Activated CD4-positive, alpha-beta memory T cell treated with anti-CD3 and anti-CD28 coated beads for 36 hours (primary cell): ENCODE measurements at regions of chr3 and their contacts with region 1.

Region 1: DNA sequence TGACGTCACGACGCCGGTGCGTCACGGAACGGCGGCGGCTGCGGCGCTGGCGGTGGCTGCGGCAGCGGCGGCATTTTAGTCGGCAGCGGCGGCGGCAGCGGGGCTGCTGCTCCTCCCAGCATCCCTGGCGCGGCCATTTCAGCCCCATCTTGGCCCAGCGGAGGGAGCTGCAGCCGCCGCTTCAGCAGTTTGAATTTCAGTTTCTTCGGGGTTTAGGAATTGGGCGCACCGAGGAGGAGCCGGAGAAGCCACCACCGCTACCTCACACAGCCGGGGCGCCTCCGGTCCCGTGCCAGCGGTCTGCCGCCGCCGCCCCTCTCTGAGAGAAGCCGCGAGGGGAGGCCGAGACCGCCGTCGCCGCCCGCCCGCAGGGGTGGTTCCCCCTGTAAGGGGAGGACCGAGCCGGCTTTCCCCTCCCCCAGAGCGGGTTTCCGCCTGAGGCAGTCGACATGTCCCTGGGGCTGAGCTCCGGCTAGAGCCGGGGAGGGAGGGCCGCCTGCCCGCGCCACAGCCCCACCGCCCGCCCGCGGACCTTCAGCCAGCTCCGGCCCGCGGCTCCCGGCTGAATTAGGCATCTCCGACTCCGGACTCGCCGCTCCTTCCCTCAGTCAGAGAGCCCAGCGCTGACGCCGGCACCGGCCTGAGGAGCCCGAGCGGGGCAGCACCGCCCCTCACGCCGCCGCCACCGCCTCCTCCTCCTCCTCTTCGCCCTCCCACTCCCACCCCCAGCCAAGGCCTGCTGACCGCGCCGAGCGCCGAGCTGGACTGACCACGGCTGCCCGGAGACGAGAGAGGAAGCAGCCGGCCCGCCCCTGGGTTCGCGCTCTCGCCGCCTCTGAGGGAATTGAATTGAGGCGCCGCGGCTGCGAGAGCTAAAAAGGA is at the start of gene TSC22D2:
- DNase-seq: peak; percentile 96
- H3K4me3 Mint-ChIP-seq: peak within 1 kb of the TSS; percentile 96
- H3K27ac Mint-ChIP-seq: peak within 1 kb of the TSS; percentile 97
- H3K4me1 Mint-ChIP-seq: peaks cover 21% of the 10 kb centered on the region
- H3K27me3 Mint-ChIP-seq: no peaks in the 10 kb centered on the region
- total RNA-seq, gene TSC22D2: 12.3 to 13.7 TPM

Region 2: GRCh38 chr3:149812606-149813366 is 595.7 kb before region 1 on chr3 and contains the start of gene RNF13:
- CTCF ChIA-PET with region 1: no interaction called
- POLR2A ChIA-PET with region 1: no interaction called
- intact Hi-C with region 1: loop called (anchors 1 kb)
- DNase-seq: peak; percentile 95
- H3K4me3 Mint-ChIP-seq: peak within 1 kb of the TSS; percentile 90
- H3K27ac Mint-ChIP-seq: peak within 1 kb of the TSS; percentile 98
- H3K4me1 Mint-ChIP-seq: peaks cover 41% of the 10 kb centered on the region
- H3K27me3 Mint-ChIP-seq: peaks cover 3% of the 10 kb centered on the region
- total RNA-seq, gene RNF13: 29.4 to 31.5 TPM

Region 3: DNA sequence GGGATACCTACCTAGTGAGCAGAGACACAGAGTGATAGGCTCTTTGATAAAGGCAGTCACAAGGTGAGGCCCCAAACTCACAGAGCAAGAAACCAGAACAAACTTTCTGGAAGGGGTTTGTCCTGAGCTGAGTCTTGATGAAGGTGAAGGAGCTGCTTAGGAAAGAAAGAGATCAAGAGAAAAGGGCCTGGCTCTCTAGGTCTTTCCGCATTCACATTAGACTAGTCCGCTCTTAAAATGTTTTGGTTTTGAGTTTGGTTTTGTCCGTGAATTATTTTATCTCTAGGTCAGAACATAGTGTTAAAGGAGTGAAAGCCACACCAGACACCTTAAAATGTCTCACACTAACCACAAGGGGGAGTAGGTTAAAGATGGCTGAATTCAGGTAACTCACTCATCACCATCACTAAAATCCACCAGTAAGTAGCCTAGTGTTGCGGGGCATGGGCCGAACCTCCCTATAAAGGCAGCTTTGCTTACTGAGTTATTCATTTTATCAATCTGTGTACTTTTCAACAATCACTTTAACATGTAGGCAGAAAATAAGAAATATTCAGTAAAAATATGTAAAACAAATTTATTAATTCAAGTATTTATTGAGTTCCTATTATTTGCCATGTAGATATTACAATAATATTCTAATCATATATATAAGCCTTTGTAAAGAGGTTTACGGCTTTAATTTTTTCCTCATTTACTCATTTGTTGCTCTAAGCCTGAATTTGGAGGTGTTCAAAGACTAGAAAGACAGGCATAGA is 121.9 kb before region 1 on chr3:
- CTCF ChIA-PET with region 1: interaction called, 3 read pairs
- POLR2A ChIA-PET with region 1: no interaction called
- intact Hi-C with region 1: loop called (anchors 1 kb)
- DNase-seq: peak; percentile 12
- H3K4me3 Mint-ChIP-seq: no peak overlapping the region
- H3K27ac Mint-ChIP-seq: no peak overlapping the region
- H3K4me1 Mint-ChIP-seq: no peaks in the 10 kb centered on the region
- H3K27me3 Mint-ChIP-seq: peaks cover 14% of the 10 kb centered on the region

Region 4: GRCh38 chr3:150428562-150428961 is 20.1 kb after region 1 on chr3:
- CTCF ChIA-PET with region 1: interaction called, 15 read pairs
- POLR2A ChIA-PET with region 1: interaction called, 5 read pairs
- intact Hi-C with region 1: loop called (anchors 2 kb)
- DNase-seq: no peak
- H3K4me3 Mint-ChIP-seq: no peak overlapping the region
- H3K27ac Mint-ChIP-seq: no peak overlapping the region
- H3K4me1 Mint-ChIP-seq: peaks cover 38% of the 10 kb centered on the region
- H3K27me3 Mint-ChIP-seq: no peaks in the 10 kb centered on the region

Region 5: DNA sequence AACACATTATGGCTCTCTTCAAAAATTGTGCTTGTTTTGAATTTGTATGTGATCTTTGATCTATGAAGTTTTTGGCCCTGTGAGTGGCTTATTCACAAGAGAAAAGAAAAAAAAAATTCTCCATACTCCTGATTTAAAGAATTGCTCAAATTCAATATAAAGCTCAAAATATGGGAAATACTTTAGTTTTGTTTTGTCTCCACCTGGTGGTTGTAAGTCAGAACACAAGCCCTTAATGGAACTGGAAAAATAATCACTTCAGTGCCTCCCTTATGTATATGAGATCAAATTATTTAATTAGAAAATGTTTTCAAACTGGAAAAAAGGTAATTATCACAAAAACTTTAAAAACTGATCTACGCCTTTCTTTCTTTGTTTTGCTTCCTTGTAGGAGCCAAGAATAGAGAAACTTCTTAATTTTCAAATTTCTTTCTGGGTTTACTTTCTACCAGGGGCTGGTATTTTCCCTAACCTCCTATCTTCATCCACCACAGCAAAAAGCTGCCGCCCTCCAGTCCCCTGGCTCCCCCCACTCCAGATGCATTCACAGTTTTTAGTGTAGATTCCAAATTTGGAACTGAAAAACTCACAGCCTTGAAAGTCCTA is 87.2 kb after region 1 on chr3:
- CTCF ChIA-PET with region 1: interaction called, 38 read pairs
- POLR2A ChIA-PET with region 1: interaction called, 4 read pairs
- intact Hi-C with region 1: loop called (anchors 1 kb)
- DNase-seq: no peak
- H3K4me3 Mint-ChIP-seq: no peak overlapping the region
- H3K27ac Mint-ChIP-seq: no peak overlapping the region
- H3K4me1 Mint-ChIP-seq: no peaks in the 10 kb centered on the region
- H3K27me3 Mint-ChIP-seq: no peaks in the 10 kb centered on the region

Region 6: GRCh38 chr3:150603153-150603979 is 194.9 kb after region 1 on chr3 and contains the start of gene SELENOT:
- CTCF ChIA-PET with region 1: interaction called, 3 read pairs
- POLR2A ChIA-PET with region 1: interaction called, 5 read pairs
- intact Hi-C with region 1: loop called (anchors 1 kb)
- DNase-seq: peak; percentile 96
- H3K4me3 Mint-ChIP-seq: peak within 1 kb of the TSS; percentile 96
- H3K27ac Mint-ChIP-seq: peak within 1 kb of the TSS; percentile 97
- H3K4me1 Mint-ChIP-seq: peaks cover 51% of the 10 kb centered on the region
- H3K27me3 Mint-ChIP-seq: no peaks in the 10 kb centered on the region
- total RNA-seq, gene SELENOT: 105 to 111 TPM

Region 7: DNA sequence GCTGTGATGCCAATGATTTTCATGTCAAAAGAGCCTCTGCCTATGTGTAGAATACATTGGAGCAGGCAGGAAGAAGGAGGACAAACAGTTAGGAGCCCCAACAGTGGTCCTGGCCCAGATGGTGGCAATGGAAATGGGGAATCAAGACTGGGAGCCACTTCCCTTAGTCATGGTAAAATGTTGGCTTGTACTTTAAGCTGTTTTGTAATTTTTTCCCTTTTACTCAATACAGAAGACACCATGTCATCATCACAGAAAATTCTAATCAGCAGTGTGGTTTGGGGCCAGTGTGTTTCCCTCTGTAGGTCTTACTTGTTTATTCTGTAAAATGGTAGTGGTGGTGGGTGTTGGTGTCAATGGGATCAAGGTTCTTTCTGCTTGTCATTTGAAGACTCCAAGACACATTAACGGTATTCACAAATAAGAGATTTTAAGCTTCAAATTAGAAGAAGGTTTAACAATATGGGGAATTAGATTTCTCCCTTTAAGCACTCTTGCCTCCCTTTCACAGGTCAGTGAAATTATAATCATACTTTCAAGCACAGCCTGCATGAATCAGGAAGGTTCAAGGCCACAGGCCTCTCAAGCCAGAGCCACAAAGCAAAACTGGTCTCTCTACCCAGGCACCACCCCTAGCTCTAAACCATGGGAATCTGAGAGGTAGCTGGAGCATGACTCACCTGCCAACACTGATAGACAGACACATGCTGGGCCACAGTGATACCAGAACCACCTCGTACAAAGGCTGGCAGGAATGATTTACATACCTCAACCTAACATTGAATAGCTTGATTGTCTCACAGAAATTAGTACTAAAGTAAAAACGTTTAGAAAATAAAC is 329.6 kb after region 1 on chr3:
- CTCF ChIA-PET with region 1: no interaction called
- POLR2A ChIA-PET with region 1: interaction called, 3 read pairs
- intact Hi-C with region 1: loop called (anchors 2 kb)
- DNase-seq: peak; percentile 79
- H3K4me3 Mint-ChIP-seq: peak overlapping the region; percentile 38
- H3K27ac Mint-ChIP-seq: peak overlapping the region; percentile 99
- H3K4me1 Mint-ChIP-seq: peaks cover 73% of the 10 kb centered on the region
- H3K27me3 Mint-ChIP-seq: no peaks in the 10 kb centered on the region